ENCODE measurements at regions of chr1 and their contacts with region 1.

Region 1: GRCh38 chr1:16386454-16387113 is 19.5 kb downstream of the SZRD1 start:
- DNase-seq: peak; percentile 80
- H3K4me3 ChIP-seq: peak overlapping the region in 2 of 3 experiments; percentile 28 to 47
- H3K27ac ChIP-seq: no peak overlapping the region
- H3K4me1 ChIP-seq: peaks cover 28% of the 10 kb centered on the region
- H3K27me3 ChIP-seq: no peaks in the 10 kb centered on the region
- CTCF ChIP-seq: no peak

Region 2: DNA sequence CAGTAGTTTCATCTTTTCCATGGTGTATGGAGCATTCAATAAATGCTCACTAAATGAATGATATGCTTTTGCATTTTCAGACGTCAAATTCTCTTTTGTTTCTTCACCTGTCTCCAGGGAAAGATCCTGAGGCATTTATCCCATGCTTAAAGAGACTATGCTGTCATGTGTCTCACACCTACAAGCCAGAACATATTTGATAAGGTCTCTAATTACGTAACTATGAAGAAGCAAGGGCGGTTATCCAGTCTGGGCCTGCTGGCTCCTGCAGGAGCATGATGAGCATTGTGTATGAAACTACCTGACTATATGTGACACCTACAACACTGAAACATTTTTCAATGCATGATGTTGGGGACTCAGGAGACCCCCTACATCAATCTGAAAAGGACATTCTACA is 86.1 kb before region 1 on chr1:
- CTCF ChIA-PET with region 1: no interaction called
- dilution Hi-C with region 1: loop called (anchors 5 kb)
- in situ Hi-C with region 1: no loop called
- intact Hi-C with region 1: no loop called
- DNase-seq: peak; percentile 96
- H3K4me3 ChIP-seq: no peak overlapping the region
- H3K27ac ChIP-seq: peak overlapping the region; percentile 59
- H3K4me1 ChIP-seq: peaks cover 18% of the 10 kb centered on the region
- H3K27me3 ChIP-seq: no peaks in the 10 kb centered on the region
- CTCF ChIP-seq: no peak

Region 3: DNA sequence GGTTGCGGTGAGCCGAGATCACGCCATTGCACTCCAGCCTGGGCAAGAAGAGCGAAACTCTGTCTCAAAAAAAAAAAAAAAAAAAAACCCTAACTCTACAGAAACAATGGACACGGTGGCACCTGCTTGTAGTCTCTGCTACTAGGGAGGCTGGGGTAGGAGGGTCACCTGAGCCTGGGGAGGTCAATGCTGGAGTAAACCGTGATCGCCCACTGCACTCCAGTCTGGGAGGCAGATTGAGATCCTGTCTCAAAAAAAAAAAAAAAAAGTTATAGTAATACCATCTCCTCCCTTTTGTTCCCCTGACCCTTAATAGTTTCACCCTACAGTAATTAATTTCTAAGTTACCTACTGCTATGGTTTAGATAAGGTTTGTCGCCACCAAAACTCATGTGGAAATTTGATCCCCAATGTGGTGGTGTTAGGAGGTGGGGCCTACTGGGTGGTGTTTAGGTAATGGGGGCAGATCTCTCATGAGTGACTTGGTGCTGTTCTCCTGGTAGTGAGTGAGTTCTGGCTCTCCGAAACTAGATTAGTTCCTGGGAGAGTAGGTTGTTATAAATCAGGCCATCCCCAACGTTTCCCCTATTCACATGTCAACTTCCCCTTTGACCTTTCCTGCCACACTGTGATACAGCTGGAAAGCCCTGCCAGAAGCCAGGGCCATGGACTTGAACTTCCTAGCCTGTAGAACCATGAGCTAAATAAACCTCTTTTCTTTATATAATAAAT is 44.1 kb before region 1 on chr1:
- CTCF ChIA-PET with region 1: interaction called, 14 read pairs
- dilution Hi-C with region 1: no loop called
- in situ Hi-C with region 1: no loop called
- intact Hi-C with region 1: no loop called
- DNase-seq: no peak
- H3K4me3 ChIP-seq: no peak overlapping the region
- H3K27ac ChIP-seq: no peak overlapping the region
- H3K4me1 ChIP-seq: no peaks in the 10 kb centered on the region
- H3K27me3 ChIP-seq: no peaks in the 10 kb centered on the region
- CTCF ChIP-seq: no peak

Region 4: GRCh38 chr1:16430606-16431005 is 44.0 kb after region 1 on chr1:
- CTCF ChIA-PET with region 1: no interaction called
- dilution Hi-C with region 1: loop called (anchors 5 kb)
- in situ Hi-C with region 1: no loop called
- intact Hi-C with region 1: no loop called
- DNase-seq: peak; percentile 9
- H3K4me3 ChIP-seq: no peak overlapping the region
- H3K27ac ChIP-seq: no peak overlapping the region
- H3K4me1 ChIP-seq: no peaks in the 10 kb centered on the region
- H3K27me3 ChIP-seq: no peaks in the 10 kb centered on the region
- CTCF ChIP-seq: no peak

Region 5: GRCh38 chr1:16464903-16465625 is 78.5 kb after region 1 on chr1:
- CTCF ChIA-PET with region 1: no interaction called
- dilution Hi-C with region 1: no loop called
- in situ Hi-C with region 1: no loop called
- intact Hi-C with region 1: no loop called
- DNase-seq: no peak
- H3K4me3 ChIP-seq: no peak overlapping the region
- H3K27ac ChIP-seq: no peak overlapping the region
- H3K4me1 ChIP-seq: no peaks in the 10 kb centered on the region
- H3K27me3 ChIP-seq: no peaks in the 10 kb centered on the region
- CTCF ChIP-seq: no peak

Region 6: GRCh38 chr1:16926491-16927073 is 540.0 kb after region 1 on chr1:
- CTCF ChIA-PET with region 1: no interaction called
- dilution Hi-C with region 1: no loop called
- in situ Hi-C with region 1: no loop called
- intact Hi-C with region 1: no loop called
- DNase-seq: no peak
- H3K4me3 ChIP-seq: no peak overlapping the region
- H3K27ac ChIP-seq: no peak overlapping the region
- H3K4me1 ChIP-seq: peaks cover 39% of the 10 kb centered on the region
- H3K27me3 ChIP-seq: no peaks in the 10 kb centered on the region
- CTCF ChIP-seq: no peak

Region 7: GRCh38 chr1:17909634-17910033 is 1523.0 kb after region 1 on chr1:
- CTCF ChIA-PET with region 1: no interaction called
- dilution Hi-C with region 1: no loop called
- in situ Hi-C with region 1: no loop called
- intact Hi-C with region 1: no loop called
- DNase-seq: no peak
- H3K4me3 ChIP-seq: no peak overlapping the region
- H3K27ac ChIP-seq: no peak overlapping the region
- H3K4me1 ChIP-seq: no peaks in the 10 kb centered on the region
- H3K27me3 ChIP-seq: no peaks in the 10 kb centered on the region
- CTCF ChIP-seq: peak in 1 of 2 donors; percentile 38

Measured in mammary epithelial cell (primary cell).